Activated T-helper 1 cell treated with anti-CD3 and anti-CD28 coated beads, Interleukin-12 subunit alpha, Interleukin-12 subunit beta, Interleukin-2, Interleukin-4 antibody, amounts not matched to agents 30 ng/mL and 10 ng/mL and 1 ng/mL, durations not matched to agents 14 hours and 24 hours and 36 hours (primary cell): ENCODE measurements at regions of chr1 and their contacts with region 1.

Region 1: DNA sequence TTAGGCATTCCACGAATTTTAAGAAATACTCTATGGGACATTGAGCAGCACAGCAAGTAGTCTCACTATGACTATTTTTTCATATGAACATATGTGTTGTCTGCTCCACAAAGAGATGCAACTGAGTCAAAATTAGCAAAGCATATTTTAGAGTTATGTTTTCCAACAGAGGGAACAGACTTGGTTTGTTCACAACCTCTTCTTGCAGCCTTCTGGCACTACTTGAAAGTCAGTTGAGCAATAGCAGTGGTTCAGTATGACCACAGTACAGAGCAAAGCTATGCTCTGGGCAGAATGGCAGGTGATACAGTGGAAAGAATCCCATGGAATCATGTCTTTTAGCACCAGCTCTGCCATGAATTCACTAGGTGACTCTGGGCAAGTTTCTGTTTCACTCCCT is 5.2 kb downstream of the CCN1 start:
- DNase-seq: no peak
- H3K4me3 Mint-ChIP-seq: no peak overlapping the region
- H3K27ac Mint-ChIP-seq: no peak overlapping the region
- H3K4me1 Mint-ChIP-seq: peaks cover 10% of the 10 kb centered on the region
- H3K27me3 Mint-ChIP-seq: peaks cover 37% of the 10 kb centered on the region

Region 2: DNA sequence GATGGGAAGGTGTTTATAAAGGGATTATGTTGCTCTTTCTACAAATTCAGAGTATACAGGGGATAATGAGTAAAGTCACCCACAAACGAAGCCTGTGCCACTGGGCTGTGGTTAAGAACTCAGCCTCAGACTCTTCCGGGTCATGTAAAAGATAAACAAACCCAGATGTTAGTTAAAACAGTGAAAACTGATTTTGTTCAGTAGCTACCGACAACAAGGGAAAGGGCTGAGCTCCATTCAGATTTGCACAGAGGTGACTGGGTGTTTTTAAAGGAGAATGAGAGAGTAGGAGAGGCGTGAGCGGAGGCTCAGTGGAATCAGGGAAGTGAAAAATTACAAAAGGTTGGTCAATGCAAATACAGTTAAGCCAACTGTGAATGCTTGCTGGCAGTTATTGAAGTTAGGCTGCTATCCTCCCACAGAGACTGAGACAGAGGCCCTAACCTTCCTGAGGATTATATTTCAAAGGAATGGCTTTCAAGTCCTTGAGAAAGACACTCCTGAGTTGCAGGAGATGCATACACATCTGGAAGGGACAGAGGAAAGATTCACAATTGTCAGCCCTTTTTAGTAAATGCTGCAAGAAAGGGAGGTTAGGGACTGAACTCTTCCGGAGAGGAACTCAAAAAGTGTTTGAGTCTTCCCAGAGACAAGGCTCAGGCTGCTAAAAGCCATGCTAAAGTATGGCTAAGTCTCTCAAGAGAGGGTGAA is 1314.2 kb before region 1 on chr1:
- intact Hi-C with region 1: loop called (anchors 5 kb)
- DNase-seq: no peak
- H3K4me3 Mint-ChIP-seq: no peak overlapping the region
- H3K27ac Mint-ChIP-seq: no peak overlapping the region
- H3K4me1 Mint-ChIP-seq: peaks cover 9% of the 10 kb centered on the region
- H3K27me3 Mint-ChIP-seq: peaks cover 2% of the 10 kb centered on the region

Region 3: DNA sequence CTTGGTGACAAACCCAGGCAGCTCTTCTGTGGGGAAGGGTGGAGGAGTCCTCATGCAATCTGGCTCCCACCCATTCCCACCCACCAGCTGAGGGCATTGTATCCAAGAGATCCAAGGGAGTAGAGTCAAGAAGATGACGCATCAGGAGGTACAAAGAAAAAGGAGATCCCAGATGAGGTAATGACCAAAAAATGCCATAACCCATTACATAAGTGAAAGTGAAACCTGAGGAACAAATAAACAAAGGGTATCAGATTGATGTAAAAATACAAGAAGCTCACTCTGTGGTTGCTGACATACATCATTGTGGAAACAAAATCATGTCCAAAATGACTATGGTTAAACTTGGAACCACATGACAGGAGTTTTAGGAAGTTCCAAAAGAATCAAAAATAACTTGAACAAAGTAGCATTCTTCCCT is 37.3 kb after region 1 on chr1:
- intact Hi-C with region 1: loop called (anchors 1 kb)
- DNase-seq: no peak
- H3K4me3 Mint-ChIP-seq: no peak overlapping the region
- H3K27ac Mint-ChIP-seq: peak overlapping the region; percentile 18
- H3K4me1 Mint-ChIP-seq: peaks cover 15% of the 10 kb centered on the region
- H3K27me3 Mint-ChIP-seq: no peaks in the 10 kb centered on the region